ENCODE measurements at regions of chr10 and their contacts with region 1.

Region 1: GRCh38 chr10:97318772-97319651 is at the start of gene FRAT1:
- DNase-seq: peak; percentile 89

Region 2: GRCh38 chr10:97292097-97292862 is 26.7 kb before region 1 on chr10 and contains the start of gene ARHGAP19:
- CTCF ChIA-PET with region 1: no interaction called
- POLR2A ChIA-PET with region 1: interaction called, 20 read pairs
- DNase-seq: peak; percentile 96